AG04450 (cell line): ENCODE measurements at regions of chr20 and their contacts with region 1.

Region 1: DNA sequence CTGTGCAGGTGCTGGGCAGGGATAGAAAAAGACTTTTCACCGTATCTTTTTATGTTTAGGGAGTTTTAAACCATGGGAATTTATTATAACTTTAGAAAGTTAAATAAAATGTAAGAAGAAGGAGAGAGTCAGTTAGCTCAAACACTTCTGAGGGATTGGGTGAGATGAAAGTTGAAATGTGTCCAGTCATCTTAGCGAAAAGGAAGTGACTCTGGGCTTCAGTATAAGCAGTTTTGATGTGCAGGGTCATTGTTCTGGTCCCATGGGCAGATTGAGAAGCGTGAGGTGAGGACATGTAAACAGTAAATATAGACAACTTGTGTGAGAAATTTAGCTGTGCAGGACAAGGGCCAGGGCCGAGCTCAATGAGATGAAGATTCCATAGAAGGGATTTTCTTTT is 66.9 kb downstream of the TOX2 start:
- DNase-seq: no peak
- H3K4me3 ChIP-seq: no peak overlapping the region
- H3K27ac ChIP-seq: no peak overlapping the region
- H3K27me3 ChIP-seq: no peaks in the 10 kb centered on the region
- CTCF ChIP-seq: no peak

Region 2: DNA sequence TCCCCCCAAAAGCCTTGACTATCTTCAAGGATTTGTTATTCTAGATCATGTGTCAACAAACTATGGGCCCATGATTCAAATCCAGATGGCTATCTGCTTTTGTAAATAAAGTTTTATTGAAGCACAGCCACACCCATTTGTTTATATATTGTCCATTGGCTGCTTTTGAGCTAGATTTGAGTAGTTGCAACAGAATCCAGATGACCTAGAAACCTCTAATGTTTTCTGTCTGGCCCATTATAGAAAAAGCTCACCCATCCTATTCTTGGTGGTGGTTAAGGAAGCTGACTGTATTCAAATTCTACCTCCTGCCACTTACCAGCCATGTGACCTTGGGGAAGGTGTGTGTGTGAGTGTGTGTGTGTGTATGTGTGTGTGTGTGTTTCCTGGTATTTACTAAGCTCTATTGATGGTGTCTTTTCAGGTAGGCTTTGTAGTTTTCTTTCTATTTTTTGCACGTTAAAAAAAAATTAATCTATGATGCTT is 253.5 kb before region 1 on chr20:
- CTCF ChIA-PET with region 1: no interaction called
- POLR2A ChIA-PET with region 1: interaction called, 12 read pairs
- DNase-seq: no peak
- H3K4me3 ChIP-seq: no peak overlapping the region
- H3K27ac ChIP-seq: no peak overlapping the region
- H3K27me3 ChIP-seq: no peaks in the 10 kb centered on the region
- CTCF ChIP-seq: no peak

Region 3: GRCh38 chr20:43744151-43744611 is 237.4 kb before region 1 on chr20:
- CTCF ChIA-PET with region 1: no interaction called
- POLR2A ChIA-PET with region 1: no interaction called
- DNase-seq: no peak
- H3K4me3 ChIP-seq: no peak overlapping the region
- H3K27ac ChIP-seq: no peak overlapping the region
- H3K27me3 ChIP-seq: peaks cover 5% of the 10 kb centered on the region
- CTCF ChIP-seq: no peak